ENCODE measurements at regions of chr3 and their contacts with region 1.

Region 1: GRCh38 chr3:196317687-196318467 is at the start of gene DYNLT2B:
- DNase-seq: peak; percentile 88 to 91 (median 90)
- H3K4me3 ChIP-seq: peak within 1 kb of the TSS; percentile 52 to 88
- H3K4me3 Mint-ChIP-seq: peak within 1 kb of the TSS; percentile 93 to 97 (median 94)
- H3K27ac ChIP-seq: peak within 1 kb of the TSS; percentile 86
- H3K27ac Mint-ChIP-seq: peak within 1 kb of the TSS; percentile 93 to 98 (median 98)
- H3K4me1 ChIP-seq: peaks cover 11% of the 10 kb centered on the region
- H3K4me1 Mint-ChIP-seq: peaks cover 1 to 16% (median 8%) of the 10 kb centered on the region in 4 donors
- H3K27me3 ChIP-seq: no peaks in the 10 kb centered on the region
- H3K27me3 Mint-ChIP-seq: no peaks in the 10 kb centered on the region
- total RNA-seq, gene DYNLT2B: 6.0 to 7.4 TPM

Region 2: GRCh38 chr3:196274585-196274984 is 43.3 kb before region 1 on chr3:
- CTCF ChIA-PET with region 1: interaction called, 5 read pairs
- POLR2A ChIA-PET with region 1: interaction called, 24 read pairs
- intact Hi-C with region 1: loop called (anchors 1 kb)
- DNase-seq: peak; percentile 71 to 86 (median 79)
- H3K4me3 ChIP-seq: peak overlapping the region; percentile 21 to 52
- H3K4me3 Mint-ChIP-seq: peak overlapping the region; percentile 76 to 89 (median 82)
- H3K27ac ChIP-seq: peak overlapping the region; percentile 75
- H3K27ac Mint-ChIP-seq: peak overlapping the region; percentile 89 to 99 (median 97)
- H3K4me1 ChIP-seq: peaks cover 46% of the 10 kb centered on the region
- H3K4me1 Mint-ChIP-seq: peaks cover 29 to 63% (median 38%) of the 10 kb centered on the region in 4 donors
- H3K27me3 ChIP-seq: no peaks in the 10 kb centered on the region
- H3K27me3 Mint-ChIP-seq: no peaks in the 10 kb centered on the region

Region 3: GRCh38 chr3:196287440-196288148 is 30.3 kb before region 1 on chr3 and contains the start of gene PCYT1A:
- CTCF ChIA-PET with region 1: no interaction called
- POLR2A ChIA-PET with region 1: no interaction called
- intact Hi-C with region 1: loop called (anchors 1 kb)
- DNase-seq: peak; percentile 66 to 80 (median 73)
- H3K4me3 ChIP-seq: peak within 1 kb of the TSS; percentile 87 to 89
- H3K4me3 Mint-ChIP-seq: peak within 1 kb of the TSS; percentile 95 to 100 (median 99)
- H3K27ac ChIP-seq: peak within 1 kb of the TSS; percentile 92
- H3K27ac Mint-ChIP-seq: peak within 1 kb of the TSS; percentile 91 to 100 (median 98)
- H3K4me1 ChIP-seq: peaks cover 45% of the 10 kb centered on the region
- H3K4me1 Mint-ChIP-seq: peaks cover 29 to 52% (median 46%) of the 10 kb centered on the region in 4 donors
- H3K27me3 ChIP-seq: no peaks in the 10 kb centered on the region
- H3K27me3 Mint-ChIP-seq: no peaks in the 10 kb centered on the region
- total RNA-seq, gene PCYT1A: 70.1 to 73.7 TPM

Region 4: DNA sequence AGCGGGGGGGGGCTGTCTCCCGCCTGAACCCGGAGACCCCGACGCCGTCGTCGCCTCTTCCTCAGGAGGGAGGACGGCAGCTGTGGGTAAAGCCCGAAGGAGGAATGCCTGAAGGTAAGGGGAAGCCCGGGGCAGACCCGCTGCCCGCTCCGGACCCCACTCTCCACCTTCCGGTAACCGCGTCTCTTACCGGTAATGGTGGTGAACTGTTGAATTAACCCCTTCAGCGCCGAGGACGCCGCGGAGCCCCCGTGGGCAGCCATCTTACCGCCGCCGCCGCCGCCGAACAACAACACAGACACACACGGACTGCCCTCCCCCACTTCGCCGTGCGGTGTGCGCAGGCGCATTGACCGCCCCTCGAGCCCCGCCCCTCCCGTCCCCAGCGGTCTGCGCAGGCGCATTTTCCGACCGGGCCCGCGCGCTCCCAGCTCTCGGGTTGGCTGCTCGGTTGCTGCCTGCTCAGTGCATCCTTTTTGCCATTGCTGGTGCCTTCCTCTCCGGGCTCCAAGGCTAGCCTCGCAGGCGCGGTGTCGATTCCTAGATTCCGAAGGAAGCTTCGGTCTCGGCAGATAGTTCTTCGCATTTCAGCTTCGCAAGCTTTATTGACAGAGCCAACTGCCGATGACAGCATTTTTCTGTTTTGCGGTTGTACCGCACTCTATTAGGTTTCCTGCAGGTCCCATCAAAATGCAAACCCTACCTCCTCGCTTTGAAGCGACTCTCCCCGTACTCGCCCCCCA is 114.4 kb after region 1 on chr3 and contains the start of gene UBXN7:
- CTCF ChIA-PET with region 1: no interaction called
- POLR2A ChIA-PET with region 1: interaction called, 19 read pairs
- intact Hi-C with region 1: loop called (anchors 5 kb)
- DNase-seq: peak; percentile 92 to 96 (median 95)
- H3K4me3 ChIP-seq: peak within 1 kb of the TSS; percentile 64 to 95
- H3K4me3 Mint-ChIP-seq: peak within 1 kb of the TSS; percentile 70 to 97 (median 85)
- H3K27ac ChIP-seq: peak within 1 kb of the TSS; percentile 81
- H3K27ac Mint-ChIP-seq: peak within 1 kb of the TSS; percentile 80 to 97 (median 96)
- H3K4me1 ChIP-seq: peaks cover 22% of the 10 kb centered on the region
- H3K4me1 Mint-ChIP-seq: peaks cover 8 to 35% (median 15%) of the 10 kb centered on the region in 4 donors
- H3K27me3 ChIP-seq: no peaks in the 10 kb centered on the region
- H3K27me3 Mint-ChIP-seq: no peaks in the 10 kb centered on the region
- total RNA-seq, gene UBXN7: 72.6 to 90.8 TPM

Region 5: GRCh38 chr3:196502775-196503195 is 184.9 kb after region 1 on chr3:
- CTCF ChIA-PET with region 1: no interaction called
- POLR2A ChIA-PET with region 1: interaction called, 11 read pairs
- intact Hi-C with region 1: loop called (anchors 1 kb)
- DNase-seq: peak; percentile 70 to 87 (median 73)
- H3K4me3 ChIP-seq: peak overlapping the region; percentile 70 to 79
- H3K4me3 Mint-ChIP-seq: peak overlapping the region; percentile 97 to 100 (median 98)
- H3K27ac ChIP-seq: peak overlapping the region; percentile 81
- H3K27ac Mint-ChIP-seq: peak overlapping the region; percentile 94 to 99 (median 97)
- H3K4me1 ChIP-seq: peaks cover 27% of the 10 kb centered on the region
- H3K4me1 Mint-ChIP-seq: peaks cover 25 to 56% (median 38%) of the 10 kb centered on the region in 4 donors
- H3K27me3 ChIP-seq: no peaks in the 10 kb centered on the region
- H3K27me3 Mint-ChIP-seq: no peaks in the 10 kb centered on the region

Region 6: GRCh38 chr3:196665962-196666867 is 348.3 kb after region 1 on chr3:
- CTCF ChIA-PET with region 1: no interaction called
- POLR2A ChIA-PET with region 1: no interaction called
- intact Hi-C with region 1: no loop called
- DNase-seq: no peak
- H3K4me3 ChIP-seq: no peak overlapping the region
- H3K4me3 Mint-ChIP-seq: no peak overlapping the region
- H3K27ac ChIP-seq: no peak overlapping the region
- H3K27ac Mint-ChIP-seq: peak overlapping the region in 5 of 7 donors; percentile 32 to 72 (median 60)
- H3K4me1 ChIP-seq: peaks cover 20% of the 10 kb centered on the region
- H3K4me1 Mint-ChIP-seq: peaks cover 13 to 36% (median 18%) of the 10 kb centered on the region in 4 donors
- H3K27me3 ChIP-seq: no peaks in the 10 kb centered on the region
- H3K27me3 Mint-ChIP-seq: no peaks in the 10 kb centered on the region

Measured in CD4-positive, alpha-beta memory T cell (primary cell).